ENCODE measurements at regions of chr6 and their contacts with region 1.

Region 1: DNA sequence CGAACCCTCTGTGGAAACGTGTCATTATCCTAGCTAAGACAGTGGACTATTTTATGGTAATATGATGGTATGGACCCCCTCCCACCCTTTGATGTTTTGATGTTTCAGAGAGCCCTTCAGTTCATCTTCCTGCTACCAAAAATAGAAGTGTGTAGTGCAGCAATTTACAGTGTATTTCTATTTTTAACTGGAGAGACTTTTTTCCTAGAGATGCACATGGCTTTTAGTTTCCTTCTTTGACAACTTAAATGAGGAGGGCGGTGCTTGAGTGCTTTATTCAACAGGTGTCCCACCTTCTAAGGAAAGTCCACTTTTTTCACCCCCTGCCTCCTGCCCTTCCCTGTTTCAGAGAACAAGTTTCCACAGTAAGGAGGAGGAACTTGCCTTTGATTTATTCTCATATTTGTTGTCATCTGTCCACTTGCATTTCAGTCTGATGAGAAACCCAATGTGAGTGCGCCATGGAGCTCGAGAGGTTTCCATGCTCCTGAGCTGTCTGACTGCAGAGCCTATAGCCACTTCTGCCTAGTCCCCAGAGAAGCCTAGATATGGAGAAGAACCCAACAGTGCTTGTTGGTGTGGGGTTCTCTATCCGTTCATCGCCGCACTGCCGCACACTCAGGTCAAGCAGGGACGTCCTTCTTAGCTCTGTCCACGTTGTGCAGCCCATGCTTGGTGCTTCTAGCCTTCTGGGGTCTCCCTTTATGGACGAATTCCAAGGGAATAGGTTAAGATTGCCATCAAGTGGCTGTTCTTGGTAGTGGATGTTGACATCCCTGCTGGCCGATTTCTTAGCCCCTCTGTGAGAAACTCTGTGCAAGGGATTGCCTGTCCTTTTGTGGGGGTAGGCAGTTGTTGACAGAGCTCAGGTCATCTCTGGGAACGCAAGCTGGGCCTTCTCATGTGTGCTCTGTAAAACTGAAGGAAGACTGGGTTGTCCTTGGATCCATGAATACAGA is 144.2 kb downstream of the JARID2 start:
- DNase-seq: peak in 1 of 7 donors; percentile 26
- H3K4me3 ChIP-seq: no peak overlapping the region
- H3K27ac ChIP-seq: peak overlapping the region in 1 of 5 donors; percentile 9
- H3K4me1 ChIP-seq: peaks cover 31 to 47% of the 10 kb centered on the region in 2 donors
- H3K27me3 ChIP-seq: no peaks in the 10 kb centered on the region
- CTCF ChIP-seq: peak in 5 of 6 experiments; percentile 46 to 73 (median 61)
- POLR2A ChIP-seq: no peak

Region 2: GRCh38 chr6:15160812-15161211 is 229.2 kb before region 1 on chr6:
- intact Hi-C with region 1: loop called in 1 of 2 experiments (anchors 10 kb)
- DNase-seq: no peak
- H3K4me3 ChIP-seq: no peak overlapping the region
- H3K27ac ChIP-seq: no peak overlapping the region
- H3K4me1 ChIP-seq: no peaks in the 10 kb centered on the region
- H3K27me3 ChIP-seq: no peaks in the 10 kb centered on the region
- CTCF ChIP-seq: no peak
- POLR2A ChIP-seq: no peak

Measured in adrenal gland (tissue), 19 donors.